MCF 10A (cell line): ENCODE measurements at regions of chr1 and their contacts with region 1.

Region 1: DNA sequence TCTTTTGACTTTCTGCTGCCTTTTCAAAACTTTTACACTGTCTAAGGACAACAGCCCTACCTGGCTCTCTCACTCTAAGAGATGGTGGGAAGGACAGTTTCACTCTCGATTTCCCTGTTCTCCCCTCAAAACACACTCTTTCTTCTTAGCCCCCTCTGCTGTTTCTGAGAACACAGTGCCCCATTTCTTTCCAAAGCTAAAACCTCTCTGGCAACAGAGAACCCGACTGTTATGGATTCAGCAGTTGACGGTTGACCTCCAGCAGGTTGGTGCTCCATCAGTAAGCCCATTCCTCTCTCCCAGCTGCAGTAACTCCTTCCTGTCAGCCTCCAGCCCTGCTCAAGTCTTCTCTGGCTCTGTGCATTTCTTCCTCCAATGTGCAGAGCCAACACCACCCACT is 88.2 kb upstream of the ABCD3 start:
- DNase-seq: peak; percentile 56
- H3K4me3 Mint-ChIP-seq: no peak overlapping the region
- H3K27ac Mint-ChIP-seq: no peak overlapping the region
- H3K4me1 Mint-ChIP-seq: peaks cover 30% of the 10 kb centered on the region
- H3K27me3 Mint-ChIP-seq: no peaks in the 10 kb centered on the region
- CTCF ChIP-seq: peak; percentile 38

Region 2: GRCh38 chr1:94045465-94046056 is 284.4 kb before region 1 on chr1:
- CTCF ChIA-PET with region 1: interaction called, 298 read pairs
- POLR2A ChIA-PET with region 1: interaction called, 7 read pairs
- intact Hi-C with region 1: no loop called
- DNase-seq: peak; percentile 90
- H3K4me3 Mint-ChIP-seq: no peak overlapping the region
- H3K27ac Mint-ChIP-seq: peak overlapping the region; percentile 51
- H3K4me1 Mint-ChIP-seq: peaks cover 18% of the 10 kb centered on the region
- H3K27me3 Mint-ChIP-seq: no peaks in the 10 kb centered on the region
- CTCF ChIP-seq: peak; percentile 45

Region 3: DNA sequence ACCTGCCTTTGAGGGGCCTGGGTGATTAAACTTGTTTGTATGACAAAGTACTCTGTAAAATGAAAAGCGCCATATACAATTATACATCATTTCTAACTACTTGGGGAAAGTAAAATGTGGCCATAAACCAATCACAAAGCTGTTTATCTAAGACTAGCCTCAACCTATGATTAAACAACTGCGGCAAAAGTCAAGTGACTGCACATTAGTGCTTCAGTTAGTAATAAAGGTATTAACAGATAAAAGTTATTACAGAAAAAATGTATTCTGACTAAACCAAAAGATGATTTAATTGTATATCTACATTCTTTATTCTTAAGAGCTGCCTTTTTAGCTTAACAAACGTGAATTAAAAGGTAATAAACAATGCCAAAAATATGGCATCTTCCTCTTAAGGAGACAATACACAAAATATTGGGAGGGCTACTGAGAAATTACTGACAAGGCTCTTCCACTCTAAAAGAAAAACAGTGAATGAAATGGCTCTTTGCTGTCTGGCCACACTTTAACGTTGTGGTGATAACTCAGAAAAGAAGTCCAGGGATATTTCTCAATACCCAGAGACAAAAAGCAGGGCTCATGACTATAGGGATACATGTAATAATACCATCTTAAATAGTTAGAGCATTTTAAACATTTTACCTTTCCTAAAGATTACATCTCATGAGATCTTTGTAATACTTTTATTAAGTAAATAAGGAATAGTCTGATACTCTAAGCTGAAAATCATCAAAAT is 101.2 kb before region 1 on chr1:
- CTCF ChIA-PET with region 1: interaction called, 63 read pairs
- POLR2A ChIA-PET with region 1: interaction called, 26 read pairs
- intact Hi-C with region 1: no loop called
- DNase-seq: no peak
- H3K4me3 Mint-ChIP-seq: peak overlapping the region; percentile 47
- H3K27ac Mint-ChIP-seq: peak overlapping the region; percentile 49
- H3K4me1 Mint-ChIP-seq: peaks cover 48% of the 10 kb centered on the region
- H3K27me3 Mint-ChIP-seq: no peaks in the 10 kb centered on the region
- CTCF ChIP-seq: no peak

Region 4: DNA sequence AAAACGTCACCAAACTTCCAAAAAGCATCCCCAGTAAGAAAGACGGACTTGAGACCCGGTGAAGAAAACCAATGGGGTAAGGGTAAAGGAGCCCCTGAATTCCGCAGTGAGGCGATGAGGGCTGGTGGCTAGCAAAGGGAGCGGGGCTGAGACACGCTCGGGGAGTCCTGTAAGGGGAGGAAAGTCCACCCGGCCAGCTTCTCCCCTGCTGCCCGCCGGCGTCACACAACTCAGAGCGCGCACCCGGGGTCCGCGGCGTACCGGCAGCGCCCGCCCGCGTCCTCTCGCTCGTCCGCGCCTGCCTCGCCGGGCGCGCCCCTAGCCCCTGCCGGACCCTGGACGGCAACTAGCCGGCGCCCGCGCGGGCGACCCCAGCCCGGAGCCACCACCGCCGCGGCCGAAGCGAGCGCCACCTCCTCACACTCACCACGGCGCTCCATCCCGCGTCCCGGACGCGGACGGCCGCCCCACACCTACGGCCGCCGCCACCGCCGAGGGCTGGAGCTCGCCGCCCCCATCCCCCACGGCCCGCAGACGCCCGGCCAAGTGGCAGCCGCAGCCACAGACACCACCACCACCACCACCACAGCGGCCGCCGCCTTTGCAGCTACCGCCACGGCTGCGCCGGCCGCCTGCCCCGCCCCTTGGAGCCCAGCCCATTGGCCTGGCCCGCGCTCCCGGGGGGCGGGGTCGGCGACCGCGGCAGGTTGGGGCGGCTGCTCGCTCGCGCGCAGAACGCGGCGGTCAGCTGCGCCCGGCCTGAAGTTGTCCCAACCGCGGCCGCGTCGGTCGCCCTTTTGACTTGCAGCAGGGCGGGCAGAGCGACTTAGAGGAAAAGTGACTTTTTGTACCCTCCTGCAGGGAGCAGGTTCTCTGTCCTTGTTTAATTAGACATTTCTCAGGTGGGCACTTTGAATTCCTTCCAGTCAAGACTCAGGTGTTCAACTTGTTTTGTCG is 82.6 kb before region 1 on chr1:
- CTCF ChIA-PET with region 1: interaction called, 22 read pairs
- POLR2A ChIA-PET with region 1: interaction called, 12 read pairs
- intact Hi-C with region 1: loop called (anchors 1 kb)
- DNase-seq: peak; percentile 72
- H3K4me3 Mint-ChIP-seq: peak overlapping the region; percentile 82
- H3K27ac Mint-ChIP-seq: peak overlapping the region; percentile 77
- H3K4me1 Mint-ChIP-seq: peaks cover 23% of the 10 kb centered on the region
- H3K27me3 Mint-ChIP-seq: no peaks in the 10 kb centered on the region
- CTCF ChIP-seq: no peak

Region 5: DNA sequence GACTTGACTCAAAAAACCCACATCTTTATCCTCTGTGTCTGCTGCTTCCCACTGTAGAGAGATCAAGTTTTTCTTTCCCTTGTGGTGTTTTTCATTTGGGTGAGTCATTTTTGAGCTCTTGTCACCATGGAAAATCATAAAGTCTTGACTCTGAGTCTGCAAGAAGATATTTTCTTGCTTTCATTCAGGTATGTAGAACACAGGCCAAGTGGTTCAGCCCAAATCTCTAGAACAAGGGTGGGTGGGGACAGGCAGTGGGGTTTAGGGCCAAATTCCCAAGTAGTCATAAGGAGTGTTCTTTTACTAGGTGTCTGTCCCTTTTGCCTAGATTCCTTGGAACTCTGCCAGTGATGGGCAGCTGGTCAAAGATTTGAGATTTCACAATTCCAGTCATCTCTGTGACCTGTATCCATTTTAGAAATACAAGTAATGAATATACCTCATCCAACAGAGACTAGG is 71.1 kb before region 1 on chr1:
- CTCF ChIA-PET with region 1: interaction called, 12 read pairs
- POLR2A ChIA-PET with region 1: interaction called, 17 read pairs
- intact Hi-C with region 1: loop called (anchors 1 kb)
- DNase-seq: peak; percentile 89
- H3K4me3 Mint-ChIP-seq: peak overlapping the region; percentile 50
- H3K27ac Mint-ChIP-seq: peak overlapping the region; percentile 99
- H3K4me1 Mint-ChIP-seq: peaks cover 46% of the 10 kb centered on the region
- H3K27me3 Mint-ChIP-seq: no peaks in the 10 kb centered on the region
- CTCF ChIP-seq: no peak

Region 6: DNA sequence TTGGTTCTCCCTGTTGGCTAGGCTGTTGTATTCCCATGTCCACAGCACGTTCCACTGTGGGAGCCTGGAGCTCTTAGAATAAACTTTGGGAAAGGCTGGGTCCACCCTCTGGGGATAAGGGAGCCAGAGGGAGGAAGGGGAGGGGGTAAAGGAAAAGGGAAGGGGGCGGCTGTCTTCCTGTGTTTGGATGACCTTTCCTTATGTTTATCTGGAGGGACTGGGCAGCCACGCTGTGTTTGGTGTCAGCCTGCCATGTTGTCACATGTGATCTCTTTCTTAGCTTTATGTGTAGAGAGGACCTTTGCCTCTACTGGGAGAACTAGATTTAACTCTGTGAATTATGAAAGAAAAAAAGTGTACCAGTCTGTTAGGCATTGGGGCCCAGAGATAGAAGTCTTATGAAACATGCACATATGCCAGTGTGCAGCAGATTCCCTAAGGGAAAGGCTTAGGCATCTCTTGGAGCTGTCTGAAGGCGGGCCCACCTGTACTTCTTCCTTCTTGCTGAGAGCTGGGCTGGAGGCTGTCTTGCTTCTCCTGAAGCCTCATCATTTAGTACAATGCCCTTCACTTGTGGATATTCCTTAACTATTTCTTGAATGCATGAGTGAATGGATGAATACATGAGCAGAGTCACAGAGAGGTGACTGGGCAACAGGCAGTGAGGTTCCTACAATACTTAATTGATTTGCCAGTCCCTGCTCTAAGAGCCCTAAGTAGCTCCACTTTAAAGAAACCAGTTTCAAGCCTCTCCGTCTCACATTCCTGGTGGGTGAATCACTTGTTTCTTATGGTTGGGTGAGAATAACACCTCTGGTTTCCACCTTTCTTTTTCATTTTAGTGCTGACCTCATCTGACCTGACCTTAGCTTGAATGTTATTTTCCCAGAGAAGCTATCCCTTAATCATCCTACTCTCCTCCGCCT is 30.1 kb before region 1 on chr1:
- CTCF ChIA-PET with region 1: interaction called, 40 read pairs
- POLR2A ChIA-PET with region 1: interaction called, 60 read pairs
- intact Hi-C with region 1: no loop called
- DNase-seq: peak; percentile 91
- H3K4me3 Mint-ChIP-seq: no peak overlapping the region
- H3K27ac Mint-ChIP-seq: peak overlapping the region; percentile 92
- H3K4me1 Mint-ChIP-seq: peaks cover 30% of the 10 kb centered on the region
- H3K27me3 Mint-ChIP-seq: no peaks in the 10 kb centered on the region
- CTCF ChIP-seq: no peak

Region 7: GRCh38 chr1:94351485-94351884 is 21.5 kb after region 1 on chr1:
- CTCF ChIA-PET with region 1: no interaction called
- POLR2A ChIA-PET with region 1: no interaction called
- intact Hi-C with region 1: no loop called
- DNase-seq: no peak
- H3K4me3 Mint-ChIP-seq: no peak overlapping the region
- H3K27ac Mint-ChIP-seq: no peak overlapping the region
- H3K4me1 Mint-ChIP-seq: no peaks in the 10 kb centered on the region
- H3K27me3 Mint-ChIP-seq: no peaks in the 10 kb centered on the region
- CTCF ChIP-seq: no peak